Right cardiac atrium (tissue), 5 donors: ENCODE measurements at regions of chr19 and their contacts with region 1.

Region 1: GRCh38 chr19:31392464-31392863 is 43.2 kb upstream of the TSHZ3 start:
- DNase-seq: no peak
- ATAC-seq: no peak
- H3K4me3 ChIP-seq: no peak overlapping the region
- H3K27ac ChIP-seq: no peak overlapping the region
- H3K4me1 ChIP-seq: no peaks in the 10 kb centered on the region
- H3K27me3 ChIP-seq: no peaks in the 10 kb centered on the region

Region 2: GRCh38 chr19:31326329-31327028 is 66.0 kb before region 1 on chr19:
- intact Hi-C with region 1: no loop called
- DNase-seq: no peak
- ATAC-seq: no peak
- H3K4me3 ChIP-seq: no peak overlapping the region
- H3K27ac ChIP-seq: no peak overlapping the region
- H3K4me1 ChIP-seq: no peaks in the 10 kb centered on the region
- H3K27me3 ChIP-seq: no peaks in the 10 kb centered on the region

Region 3: GRCh38 chr19:31448221-31448657 is 55.8 kb after region 1 on chr19:
- intact Hi-C with region 1: no loop called
- DNase-seq: peak; percentile 84 to 92 (median 91)
- ATAC-seq: peak; percentile 96 to 97
- H3K4me3 ChIP-seq: no peak overlapping the region
- H3K27ac ChIP-seq: no peak overlapping the region
- H3K4me1 ChIP-seq: peaks cover 3% of the 10 kb centered on the region
- H3K27me3 ChIP-seq: no peaks in the 10 kb centered on the region

Region 4: DNA sequence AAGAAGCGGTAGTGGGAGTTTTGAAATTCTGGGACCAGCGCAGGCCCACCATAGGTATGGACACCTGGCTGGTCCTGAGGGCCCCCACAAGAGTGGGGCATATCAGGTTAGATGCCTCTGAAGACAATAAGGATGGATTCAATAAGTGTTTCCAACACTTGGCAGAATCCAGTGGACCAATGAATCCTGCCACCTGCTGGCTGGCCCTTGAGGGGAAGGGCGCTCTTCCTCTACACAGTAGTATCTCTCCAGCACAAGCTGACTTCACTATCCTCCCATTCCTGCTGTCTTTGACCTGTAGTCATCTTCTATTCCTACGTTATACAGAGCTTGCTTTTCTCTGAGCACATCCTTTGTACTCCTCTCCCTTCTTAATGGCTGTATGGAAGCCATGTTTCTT is 156.5 kb after region 1 on chr19:
- intact Hi-C with region 1: loop called in 1 of 4 experiments (anchors 10 kb)
- DNase-seq: peak; percentile 27 to 59 (median 56)
- ATAC-seq: no peak
- H3K4me3 ChIP-seq: no peak overlapping the region
- H3K27ac ChIP-seq: no peak overlapping the region
- H3K4me1 ChIP-seq: no peaks in the 10 kb centered on the region
- H3K27me3 ChIP-seq: no peaks in the 10 kb centered on the region